ENCODE measurements at regions of chr5 and their contacts with region 1.

Region 1: GRCh38 chr5:17343675-17344074 is 126.2 kb downstream of the BASP1 start:
- DNase-seq: peak; percentile 14
- H3K4me3 Mint-ChIP-seq: no peak overlapping the region
- H3K27ac Mint-ChIP-seq: no peak overlapping the region
- H3K4me1 Mint-ChIP-seq: peaks cover 8% of the 10 kb centered on the region
- H3K27me3 Mint-ChIP-seq: peaks cover 20% of the 10 kb centered on the region
- CTCF ChIP-seq: no peak

Region 2: DNA sequence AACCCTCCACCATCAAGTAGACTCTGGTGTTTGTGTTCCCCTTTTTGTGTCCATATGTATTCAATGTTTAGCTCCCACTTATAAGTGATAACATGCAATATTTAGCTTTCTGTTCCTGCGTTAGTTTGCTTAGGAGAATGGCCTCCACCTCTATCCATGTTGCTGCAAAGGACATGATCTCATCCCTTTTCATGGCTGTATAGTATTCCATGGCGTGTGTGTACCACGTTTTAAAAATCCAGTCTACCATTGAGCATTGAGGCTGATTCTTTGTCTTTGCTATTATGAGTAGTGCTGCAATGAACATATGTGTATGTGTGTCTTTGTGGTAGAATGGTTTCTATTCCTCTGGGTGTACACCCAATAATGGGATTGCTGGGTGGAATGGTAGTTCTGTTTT is 13.8 kb after region 1 on chr5:
- CTCF ChIA-PET with region 1: no interaction called
- intact Hi-C with region 1: loop called (anchors 1 kb)
- DNase-seq: no peak
- H3K4me3 Mint-ChIP-seq: no peak overlapping the region
- H3K27ac Mint-ChIP-seq: no peak overlapping the region
- H3K4me1 Mint-ChIP-seq: no peaks in the 10 kb centered on the region
- H3K27me3 Mint-ChIP-seq: peaks cover 20% of the 10 kb centered on the region
- CTCF ChIP-seq: no peak

Region 3: DNA sequence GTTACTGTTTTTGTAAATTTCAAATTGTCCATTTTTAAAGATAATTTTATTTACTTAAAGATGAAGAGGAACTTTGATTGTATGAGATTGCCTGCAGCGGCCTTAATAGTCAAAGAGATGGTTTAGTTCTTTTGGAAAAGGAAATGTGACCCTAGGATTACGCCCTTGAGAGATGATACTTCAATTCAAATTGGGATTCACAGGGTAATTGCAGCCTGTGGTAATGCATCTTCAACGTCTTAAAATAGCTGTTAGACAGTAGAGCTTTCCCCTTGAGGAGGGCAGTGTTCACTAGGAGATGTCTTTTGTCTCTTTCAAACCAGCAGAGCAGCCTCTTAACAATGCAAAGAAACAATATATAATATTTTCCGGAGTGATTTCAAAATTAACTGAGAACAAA is 417.7 kb after region 1 on chr5:
- CTCF ChIA-PET with region 1: no interaction called
- intact Hi-C with region 1: no loop called
- DNase-seq: no peak
- H3K4me3 Mint-ChIP-seq: no peak overlapping the region
- H3K27ac Mint-ChIP-seq: no peak overlapping the region
- H3K4me1 Mint-ChIP-seq: no peaks in the 10 kb centered on the region
- H3K27me3 Mint-ChIP-seq: no peaks in the 10 kb centered on the region
- CTCF ChIP-seq: no peak

Measured in Calu3 (cell line).